ENCODE measurements at regions of chr2 and their contacts with region 1.

Region 1: DNA sequence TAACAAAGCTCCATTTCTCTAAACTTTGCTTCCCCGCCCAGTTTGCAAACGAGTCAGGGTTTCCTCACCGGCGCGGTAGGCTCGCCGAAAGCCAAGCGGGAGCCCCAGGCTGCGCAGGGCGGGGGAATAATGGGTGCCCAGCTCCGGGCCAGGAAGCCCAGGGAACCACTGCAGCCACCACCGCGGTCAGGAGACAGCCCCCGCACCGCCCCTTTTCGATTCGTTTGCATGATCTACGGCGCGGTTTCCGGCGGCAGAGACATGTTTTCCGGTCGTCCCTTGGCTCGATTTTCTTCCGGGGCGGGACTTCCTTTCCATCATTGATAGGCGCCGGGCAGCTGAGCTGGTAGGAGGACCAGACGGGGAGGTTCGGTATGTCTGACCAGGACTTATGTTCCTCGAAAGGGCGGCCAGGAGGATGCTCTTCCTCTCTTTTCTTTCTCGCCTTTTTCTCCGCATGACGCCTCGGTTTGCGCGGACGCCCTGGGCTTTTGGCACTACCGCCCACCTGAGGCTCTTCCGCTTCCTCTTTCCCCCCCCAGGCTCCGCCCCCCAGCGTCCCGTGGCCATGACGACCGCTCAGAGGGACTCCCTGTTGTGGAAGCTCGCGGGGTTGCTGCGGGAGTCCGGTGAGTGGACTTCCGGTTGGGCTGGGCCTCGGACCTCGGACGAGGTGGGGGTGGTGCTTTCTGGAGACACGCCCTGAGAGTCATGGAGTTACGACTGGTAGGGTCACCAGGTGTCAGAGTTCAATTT is at the start of gene STK11IP:
- DNase-seq: peak; percentile 94
- ATAC-seq: peak; percentile 89
- H3K4me3 Mint-ChIP-seq: peak within 1 kb of the TSS; percentile 97
- H3K27ac Mint-ChIP-seq: peak within 1 kb of the TSS; percentile 99
- H3K4me1 Mint-ChIP-seq: peaks cover 33% of the 10 kb centered on the region
- H3K27me3 Mint-ChIP-seq: no peaks in the 10 kb centered on the region
- CTCF ChIP-seq: no peak
- total RNA-seq, gene STK11IP: 31.3 to 39.9 TPM (median 31.9 TPM) in 3 replicates

Region 2: GRCh38 chr2:219530048-219530963 is 67.4 kb before region 1 on chr2:
- CTCF ChIA-PET with region 1: interaction called, 11 read pairs
- POLR2A ChIA-PET with region 1: no interaction called
- DNase-seq: peak; percentile 92
- ATAC-seq: peak; percentile 75
- H3K4me3 Mint-ChIP-seq: peak overlapping the region; percentile 60
- H3K27ac Mint-ChIP-seq: no peak overlapping the region
- H3K4me1 Mint-ChIP-seq: peaks cover 30% of the 10 kb centered on the region
- H3K27me3 Mint-ChIP-seq: peaks cover 56% of the 10 kb centered on the region
- CTCF ChIP-seq: peak; percentile 88

Region 3: DNA sequence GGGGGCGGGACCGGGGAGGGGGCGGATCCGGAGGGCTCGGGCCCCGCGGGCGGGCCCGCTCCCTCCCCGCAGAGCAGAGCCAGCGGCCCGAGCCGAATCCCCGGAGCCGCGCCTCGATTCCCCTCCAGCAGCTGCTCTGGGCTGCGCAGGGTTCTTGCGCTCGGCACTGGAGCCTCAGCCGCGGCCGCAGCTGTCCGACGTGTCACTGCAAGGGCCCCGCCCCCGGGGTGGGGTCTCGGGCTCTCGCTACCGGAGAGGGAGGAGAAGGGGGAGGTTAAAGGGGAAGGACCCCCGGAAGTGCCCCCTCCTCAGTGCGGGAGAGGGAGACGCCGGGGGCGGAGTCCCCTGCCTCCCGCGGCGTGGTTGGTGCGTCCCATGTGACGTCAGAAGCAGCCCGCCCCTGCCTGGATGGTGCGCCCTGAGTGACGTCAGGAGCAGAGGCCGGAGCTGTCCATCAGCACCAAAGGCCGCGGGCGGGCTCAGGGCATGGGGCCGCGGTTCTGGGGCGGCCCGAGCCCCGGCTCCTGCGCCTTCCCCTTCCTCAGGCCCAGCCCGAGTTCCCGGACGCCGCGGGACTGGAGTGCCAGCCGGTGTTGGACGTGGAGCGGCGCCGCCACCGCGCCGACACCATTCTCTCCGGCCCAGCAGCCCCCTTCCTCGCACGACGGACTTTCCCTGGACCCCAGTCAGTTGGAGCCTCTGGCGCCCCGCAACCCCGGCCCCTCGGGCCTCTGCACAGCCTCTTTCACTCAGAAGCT is 54.0 kb before region 1 on chr2 and contains the starts of genes CHPF and TMEM198:
- CTCF ChIA-PET with region 1: interaction called, 21 read pairs
- POLR2A ChIA-PET with region 1: interaction called, 15 read pairs
- DNase-seq: peak; percentile 99
- ATAC-seq: peak; percentile 84
- H3K4me3 Mint-ChIP-seq: peak within 1 kb of the TSS; percentile 86
- H3K27ac Mint-ChIP-seq: no peak within 1 kb of the TSS
- H3K4me1 Mint-ChIP-seq: peaks cover 18% of the 10 kb centered on the region
- H3K27me3 Mint-ChIP-seq: peaks cover 28% of the 10 kb centered on the region
- CTCF ChIP-seq: no peak
- total RNA-seq, gene CHPF: 84.3 to 97.0 TPM (median 84.8 TPM) in 3 replicates
- total RNA-seq, gene TMEM198: 7.1 to 8.1 TPM (median 7.3 TPM) in 3 replicates

Region 4: DNA sequence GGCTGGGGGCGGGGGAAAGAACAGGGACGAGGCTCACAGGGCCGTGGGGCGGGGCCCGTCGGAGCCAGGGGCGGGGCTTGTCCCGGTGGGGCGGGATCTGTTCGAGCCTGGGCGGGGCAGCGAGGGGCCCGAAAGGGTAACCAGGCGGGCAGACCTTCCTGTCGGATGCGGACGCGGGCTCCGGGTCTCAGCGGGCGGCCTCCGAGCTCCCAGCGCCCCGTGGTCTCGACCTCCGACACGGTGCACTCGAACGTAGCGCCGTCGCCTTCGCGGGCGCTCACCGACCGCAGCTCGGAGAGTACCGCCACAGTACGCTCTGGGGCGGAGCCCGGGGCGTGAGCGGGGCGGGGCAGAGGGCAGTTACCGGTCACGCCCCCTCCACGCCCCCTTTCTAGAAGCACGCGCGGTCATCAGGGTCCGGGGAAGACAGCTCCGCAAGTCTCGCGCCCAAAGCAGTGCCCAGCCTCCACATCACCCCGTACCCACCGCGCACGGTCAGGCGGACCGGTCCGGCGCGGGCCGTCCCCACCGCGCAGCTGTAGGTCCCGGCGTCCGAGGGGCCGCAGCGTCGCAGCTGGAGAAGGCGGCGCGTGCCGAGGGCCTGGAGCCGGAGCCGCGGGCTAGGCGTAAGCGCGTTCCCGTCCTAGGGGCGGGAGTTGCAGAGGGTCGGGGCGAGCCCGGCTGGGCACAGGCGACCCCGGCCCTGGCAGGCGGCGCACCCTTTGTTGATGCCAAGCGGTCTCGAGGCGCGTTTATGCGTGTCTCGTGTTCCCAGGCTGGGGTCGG is 45.2 kb before region 1 on chr2:
- CTCF ChIA-PET with region 1: interaction called, 4 read pairs
- POLR2A ChIA-PET with region 1: interaction called, 14 read pairs
- DNase-seq: peak; percentile 94
- ATAC-seq: peak; percentile 90
- H3K4me3 Mint-ChIP-seq: peak overlapping the region; percentile 93
- H3K27ac Mint-ChIP-seq: no peak overlapping the region
- H3K4me1 Mint-ChIP-seq: peaks cover 10% of the 10 kb centered on the region
- H3K27me3 Mint-ChIP-seq: peaks cover 38% of the 10 kb centered on the region
- CTCF ChIP-seq: no peak

Region 5: GRCh38 chr2:219571311-219572236 is 26.2 kb before region 1 on chr2 and contains the start of gene OBSL1:
- CTCF ChIA-PET with region 1: interaction called, 13 read pairs
- POLR2A ChIA-PET with region 1: interaction called, 24 read pairs
- DNase-seq: peak; percentile 88
- ATAC-seq: peak; percentile 79
- H3K4me3 Mint-ChIP-seq: peak within 1 kb of the TSS; percentile 49
- H3K27ac Mint-ChIP-seq: peak within 1 kb of the TSS; percentile 90
- H3K4me1 Mint-ChIP-seq: peaks cover 64% of the 10 kb centered on the region
- H3K27me3 Mint-ChIP-seq: peaks cover 27% of the 10 kb centered on the region
- CTCF ChIP-seq: no peak
- total RNA-seq, gene OBSL1: 159 to 221 TPM (median 213 TPM) in 3 replicates

Region 6: GRCh38 chr2:219576493-219577388 is 21.0 kb before region 1 on chr2:
- CTCF ChIA-PET with region 1: interaction called, 13 read pairs
- POLR2A ChIA-PET with region 1: interaction called, 24 read pairs
- DNase-seq: peak; percentile 65
- ATAC-seq: peak; percentile 86
- H3K4me3 Mint-ChIP-seq: peak overlapping the region; percentile 35
- H3K27ac Mint-ChIP-seq: peak overlapping the region; percentile 76; the same call in 1 of the 2 replicates
- H3K4me1 Mint-ChIP-seq: peaks cover 57% of the 10 kb centered on the region
- H3K27me3 Mint-ChIP-seq: peaks cover 26% of the 10 kb centered on the region
- CTCF ChIP-seq: no peak

Region 7: GRCh38 chr2:219619235-219619634 is 21.5 kb after region 1 on chr2:
- CTCF ChIA-PET with region 1: interaction called, 13 read pairs
- POLR2A ChIA-PET with region 1: interaction called, 5 read pairs
- DNase-seq: no peak
- ATAC-seq: peak; percentile 79
- H3K4me3 Mint-ChIP-seq: no peak overlapping the region
- H3K27ac Mint-ChIP-seq: no peak overlapping the region
- H3K4me1 Mint-ChIP-seq: no peaks in the 10 kb centered on the region
- H3K27me3 Mint-ChIP-seq: peaks cover 2% of the 10 kb centered on the region
- CTCF ChIP-seq: no peak

Measured in WTC11 (cell line).